ENCODE measurements at regions of chr5 and their contacts with region 1.

Region 1: DNA sequence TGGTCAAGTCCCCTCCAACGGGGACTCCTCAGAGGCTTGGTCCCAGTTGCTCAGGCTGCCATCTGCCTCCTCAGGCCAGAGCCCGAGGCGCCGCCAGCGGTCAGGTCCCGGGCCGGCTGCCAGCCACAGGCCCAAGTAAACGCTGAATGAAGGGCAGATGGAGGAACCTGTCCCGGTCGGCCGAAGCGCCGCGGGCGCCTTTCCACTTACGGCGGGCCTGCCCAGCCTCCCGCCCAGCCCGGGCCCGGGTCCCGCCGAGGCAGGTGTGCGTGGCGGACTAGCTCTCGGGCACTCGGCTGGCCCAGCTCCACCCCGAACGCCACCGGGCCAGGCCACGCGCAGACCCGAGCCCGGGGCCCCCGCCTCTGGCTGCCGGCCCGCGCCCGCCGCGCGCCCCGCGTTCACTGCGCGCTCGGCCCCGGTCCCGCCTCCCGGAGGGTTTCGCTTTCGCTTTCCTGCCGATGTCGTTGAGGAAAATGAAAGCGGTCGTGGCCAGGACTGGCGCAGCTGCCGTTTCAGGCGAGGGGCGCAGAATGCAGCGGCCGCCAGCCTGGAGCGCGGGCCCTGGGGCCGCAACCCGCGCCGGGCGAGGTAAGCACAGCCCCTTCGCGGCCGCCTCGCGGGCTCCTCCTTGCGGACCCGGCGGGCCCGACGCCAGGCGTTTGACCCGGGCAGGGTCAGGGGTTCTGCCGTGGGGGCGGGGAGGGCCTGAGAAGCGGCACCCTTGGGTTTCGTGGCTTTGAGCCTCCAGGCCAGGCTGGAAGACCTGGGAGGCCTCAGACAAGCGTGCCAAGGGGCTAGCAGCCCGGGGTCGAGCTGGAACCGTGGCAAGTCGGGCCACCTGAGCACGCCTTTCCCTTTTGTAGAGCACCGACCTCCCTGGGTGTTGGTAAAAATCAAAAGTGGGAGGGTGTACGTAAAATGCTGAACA is 41.2 kb downstream of the SLC22A5 start:
- DNase-seq: peak; percentile 72 to 90 (median 83)
- ATAC-seq: peak; percentile 78 to 79
- H3K4me3 Mint-ChIP-seq: peak overlapping the region; percentile 88 to 99 (median 98)
- H3K27ac Mint-ChIP-seq: peak overlapping the region; percentile 95 to 99 (median 98)
- H3K4me1 Mint-ChIP-seq: peaks cover 36 to 91% (median 79%) of the 10 kb centered on the region in 4 donors
- H3K27me3 Mint-ChIP-seq: no peaks in the 10 kb centered on the region

Region 2: DNA sequence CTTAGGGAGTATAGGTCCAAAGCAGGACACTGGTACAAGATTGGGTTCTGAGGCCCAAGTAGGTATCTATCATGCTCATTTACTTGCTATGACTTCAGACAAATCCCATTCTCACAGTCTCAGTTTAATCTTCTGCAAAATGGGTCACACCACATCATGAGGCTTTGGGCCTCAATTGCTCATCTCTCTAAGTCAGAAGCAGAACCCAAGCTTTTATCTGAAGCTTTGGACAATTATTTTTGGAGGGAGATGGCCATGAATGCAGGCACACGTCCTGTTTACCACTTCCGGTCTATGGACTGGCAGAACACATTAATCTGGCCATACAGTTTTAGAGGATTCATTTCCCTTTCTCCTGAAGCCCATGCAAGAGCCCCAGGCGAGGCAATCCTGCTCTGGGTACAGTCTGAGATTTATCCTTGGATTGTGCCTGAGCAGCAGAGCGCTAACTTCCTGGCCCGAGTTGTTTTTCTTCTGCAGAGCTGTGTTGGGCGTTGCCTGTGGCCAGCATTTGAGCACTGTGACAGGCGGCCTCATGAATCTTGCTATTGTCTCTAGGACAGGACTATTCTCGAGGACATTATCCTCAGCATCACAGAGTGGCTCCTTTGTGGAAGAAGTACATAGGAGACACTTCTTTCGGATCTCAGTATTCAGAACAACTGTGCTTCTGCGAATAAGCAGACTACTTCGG is 100.4 kb before region 1 on chr5:
- POLR2A ChIA-PET with region 1: no interaction called
- DNase-seq: no peak
- ATAC-seq: no peak
- H3K4me3 Mint-ChIP-seq: no peak overlapping the region
- H3K27ac Mint-ChIP-seq: peak overlapping the region in 1 of 10 donors; percentile 22
- H3K4me1 Mint-ChIP-seq: no peaks in the 10 kb centered on the region
- H3K27me3 Mint-ChIP-seq: no peaks in the 10 kb centered on the region

Region 3: GRCh38 chr5:132386644-132387286 is 24.0 kb before region 1 on chr5:
- POLR2A ChIA-PET with region 1: interaction called, 14 read pairs
- DNase-seq: peak; percentile 56 to 86 (median 74)
- ATAC-seq: peak; percentile 88 to 92
- H3K4me3 Mint-ChIP-seq: no peak overlapping the region
- H3K27ac Mint-ChIP-seq: peak overlapping the region in 6 of 10 donors; percentile 5 to 81 (median 69)
- H3K4me1 Mint-ChIP-seq: peaks cover 13 to 43% (median 21%) of the 10 kb centered on the region in 4 donors
- H3K27me3 Mint-ChIP-seq: no peaks in the 10 kb centered on the region

Region 4: DNA sequence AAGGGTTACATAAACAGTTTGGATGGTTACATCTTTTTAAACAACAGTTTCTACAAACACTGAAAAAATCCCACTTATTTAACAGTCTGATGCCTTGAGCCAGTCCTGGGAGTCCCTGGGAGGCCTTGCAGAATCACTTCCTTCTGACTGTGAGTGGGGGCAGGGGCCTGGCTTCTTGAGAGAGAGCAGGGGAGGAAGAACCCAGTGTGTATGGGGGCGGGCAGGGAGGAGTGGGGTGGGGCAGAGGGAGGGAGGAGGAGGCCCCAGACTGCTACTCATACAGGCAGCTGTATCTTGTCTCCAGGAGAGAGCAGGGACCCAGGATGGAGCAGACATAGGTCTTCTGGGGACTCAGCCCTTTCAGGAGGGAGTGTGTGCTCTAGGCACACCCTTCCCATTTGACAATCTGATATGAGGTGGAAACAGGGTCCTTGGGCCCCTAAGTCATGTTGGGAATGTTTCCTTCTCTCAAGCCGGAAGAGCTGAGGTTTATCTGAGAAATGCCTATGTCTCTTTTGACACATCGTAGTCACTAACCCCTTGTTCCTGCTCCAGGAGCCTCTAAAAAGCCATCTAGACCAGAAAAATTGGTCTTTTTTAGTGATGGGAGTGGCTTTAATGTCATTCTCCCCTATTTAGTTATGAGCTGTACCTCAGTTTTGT is 27.0 kb after region 1 on chr5:
- POLR2A ChIA-PET with region 1: interaction called, 18 read pairs
- DNase-seq: peak; percentile 29 to 82 (median 52)
- ATAC-seq: peak; percentile 90 to 93
- H3K4me3 Mint-ChIP-seq: peak overlapping the region; percentile 38 to 77 (median 68)
- H3K27ac Mint-ChIP-seq: peak overlapping the region; percentile 84 to 94 (median 90)
- H3K4me1 Mint-ChIP-seq: peaks cover 47 to 95% (median 87%) of the 10 kb centered on the region in 4 donors
- H3K27me3 Mint-ChIP-seq: no peaks in the 10 kb centered on the region

Region 5: GRCh38 chr5:132466433-132467286 is 55.9 kb after region 1 on chr5:
- POLR2A ChIA-PET with region 1: interaction called, 48 read pairs
- DNase-seq: peak in 8 of 10 donors; percentile 40 to 79 (median 73)
- ATAC-seq: peak; percentile 78 to 79
- H3K4me3 Mint-ChIP-seq: peak overlapping the region; percentile 70 to 83 (median 76)
- H3K27ac Mint-ChIP-seq: peak overlapping the region; percentile 90 to 97 (median 95)
- H3K4me1 Mint-ChIP-seq: peaks cover 48 to 100% (median 96%) of the 10 kb centered on the region in 4 donors
- H3K27me3 Mint-ChIP-seq: no peaks in the 10 kb centered on the region

Region 6: GRCh38 chr5:132479111-132479951 is 68.6 kb after region 1 on chr5:
- POLR2A ChIA-PET with region 1: interaction called, 43 read pairs
- DNase-seq: no peak
- ATAC-seq: no peak
- H3K4me3 Mint-ChIP-seq: peak overlapping the region in 3 of 10 donors; percentile 4 to 53 (median 43)
- H3K27ac Mint-ChIP-seq: peak overlapping the region; percentile 83 to 98 (median 92)
- H3K4me1 Mint-ChIP-seq: peaks cover 38 to 89% (median 83%) of the 10 kb centered on the region in 4 donors
- H3K27me3 Mint-ChIP-seq: no peaks in the 10 kb centered on the region

Measured in naive thymus-derived CD8-positive, alpha-beta T cell (primary cell).